ENCODE measurements at regions of chr7 and their contacts with region 1.

Region 1: GRCh38 chr7:116588641-116589594 is 64.1 kb downstream of the CAV1 start:
- DNase-seq: no peak
- ATAC-seq: peak; percentile 80
- H3K4me3 ChIP-seq: no peak overlapping the region
- H3K27ac ChIP-seq: no peak overlapping the region
- H3K4me1 ChIP-seq: peaks cover 29% of the 10 kb centered on the region
- H3K27me3 ChIP-seq: peaks cover 0 to 2% of the 10 kb centered on the region in 2 experiments; a peak in 2 of 4 replicates
- CTCF ChIP-seq: peak; percentile 40 to 70 (median 51); a peak in 5 of 6 replicates
- EP300 ChIP-seq: no peak
- POLR2A ChIP-seq: no peak
- RAD21 ChIP-seq: peak; percentile 88

Region 2: DNA sequence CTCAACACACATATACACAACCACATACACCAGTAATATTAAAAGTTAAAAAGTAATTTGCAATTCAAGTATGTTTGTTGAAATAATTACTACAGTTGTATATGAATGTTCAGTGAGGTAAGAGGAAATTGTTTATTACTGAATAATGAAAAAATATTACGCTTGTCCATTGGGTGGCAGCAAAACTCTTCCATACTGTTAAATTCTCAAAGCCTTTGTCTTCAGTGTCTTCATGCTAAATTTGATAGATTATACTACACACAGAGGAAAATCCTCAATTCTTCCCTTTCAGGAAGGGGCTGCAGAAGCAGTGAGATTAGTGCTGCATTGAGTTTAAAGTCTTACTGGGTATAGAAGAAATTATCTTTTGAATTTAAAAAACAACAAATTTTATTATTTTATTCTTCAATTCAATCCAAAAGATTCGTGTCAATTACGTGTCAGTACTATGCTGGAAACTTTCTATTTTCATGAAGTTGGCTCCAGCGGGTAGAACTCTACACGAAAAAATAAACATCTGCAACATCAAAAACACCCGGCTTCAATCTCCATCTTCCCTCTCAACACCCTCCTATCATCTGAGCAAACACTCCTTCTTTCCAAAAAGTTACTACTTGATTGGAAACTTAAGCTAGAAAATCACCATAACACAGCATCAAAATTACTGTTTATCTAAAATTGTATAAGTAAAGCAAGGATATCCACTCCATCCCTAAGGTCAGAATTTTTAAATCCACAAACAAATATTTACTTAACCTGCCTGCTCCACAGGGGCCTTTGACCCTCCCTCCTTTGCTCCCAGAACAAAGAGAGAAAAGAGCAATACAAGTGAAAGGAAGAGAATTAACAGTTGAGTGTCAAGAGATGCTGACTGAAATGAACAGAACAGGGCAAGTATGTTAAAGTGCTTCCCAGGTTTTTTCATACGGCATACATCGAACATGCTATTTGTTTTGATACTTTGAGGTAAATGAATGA is 415.6 kb before region 1 on chr7:
- CTCF ChIA-PET with region 1: interaction called, 33 read pairs
- POLR2A ChIA-PET with region 1: no interaction called
- RAD21 ChIA-PET with region 1: interaction called, 5 read pairs
- SMC1A ChIA-PET with region 1: interaction called, 11 read pairs
- in situ Hi-C with region 1: loop called (anchors 10 kb)
- intact Hi-C with region 1: loop called (anchors 1 kb)
- DNase-seq: no peak
- ATAC-seq: peak; percentile 74
- H3K4me3 ChIP-seq: no peak overlapping the region
- H3K27ac ChIP-seq: no peak overlapping the region
- H3K4me1 ChIP-seq: no peaks in the 10 kb centered on the region
- H3K27me3 ChIP-seq: no peaks in the 10 kb centered on the region
- CTCF ChIP-seq: peak; percentile 28 to 67 (median 31); a peak in 4 of 6 replicates
- EP300 ChIP-seq: no peak
- POLR2A ChIP-seq: no peak
- RAD21 ChIP-seq: peak; percentile 76

Region 3: GRCh38 chr7:116236020-116236630 is 352.8 kb before region 1 on chr7:
- CTCF ChIA-PET with region 1: interaction called, 15 read pairs
- POLR2A ChIA-PET with region 1: no interaction called
- RAD21 ChIA-PET with region 1: interaction called, 10 read pairs
- SMC1A ChIA-PET with region 1: interaction called, 7 read pairs
- in situ Hi-C with region 1: no loop called
- intact Hi-C with region 1: no loop called
- DNase-seq: no peak
- ATAC-seq: peak; percentile 85
- H3K4me3 ChIP-seq: no peak overlapping the region
- H3K27ac ChIP-seq: no peak overlapping the region
- H3K4me1 ChIP-seq: no peaks in the 10 kb centered on the region
- H3K27me3 ChIP-seq: no peaks in the 10 kb centered on the region
- CTCF ChIP-seq: peak; percentile 28 to 66 (median 46); a peak in 5 of 6 replicates
- EP300 ChIP-seq: no peak
- POLR2A ChIP-seq: no peak
- RAD21 ChIP-seq: peak; percentile 76

Region 4: GRCh38 chr7:116399819-116400218 is 189.1 kb before region 1 on chr7:
- CTCF ChIA-PET with region 1: no interaction called
- POLR2A ChIA-PET with region 1: no interaction called
- RAD21 ChIA-PET with region 1: no interaction called
- SMC1A ChIA-PET with region 1: no interaction called
- in situ Hi-C with region 1: no loop called
- intact Hi-C with region 1: no loop called
- DNase-seq: no peak
- ATAC-seq: no peak
- H3K4me3 ChIP-seq: no peak overlapping the region
- H3K27ac ChIP-seq: no peak overlapping the region
- H3K4me1 ChIP-seq: no peaks in the 10 kb centered on the region
- H3K27me3 ChIP-seq: peaks cover 0 to 5% of the 10 kb centered on the region in 2 experiments; a peak in 1 of 4 replicates
- CTCF ChIP-seq: no peak
- EP300 ChIP-seq: no peak
- POLR2A ChIP-seq: no peak
- RAD21 ChIP-seq: no peak

Region 5: DNA sequence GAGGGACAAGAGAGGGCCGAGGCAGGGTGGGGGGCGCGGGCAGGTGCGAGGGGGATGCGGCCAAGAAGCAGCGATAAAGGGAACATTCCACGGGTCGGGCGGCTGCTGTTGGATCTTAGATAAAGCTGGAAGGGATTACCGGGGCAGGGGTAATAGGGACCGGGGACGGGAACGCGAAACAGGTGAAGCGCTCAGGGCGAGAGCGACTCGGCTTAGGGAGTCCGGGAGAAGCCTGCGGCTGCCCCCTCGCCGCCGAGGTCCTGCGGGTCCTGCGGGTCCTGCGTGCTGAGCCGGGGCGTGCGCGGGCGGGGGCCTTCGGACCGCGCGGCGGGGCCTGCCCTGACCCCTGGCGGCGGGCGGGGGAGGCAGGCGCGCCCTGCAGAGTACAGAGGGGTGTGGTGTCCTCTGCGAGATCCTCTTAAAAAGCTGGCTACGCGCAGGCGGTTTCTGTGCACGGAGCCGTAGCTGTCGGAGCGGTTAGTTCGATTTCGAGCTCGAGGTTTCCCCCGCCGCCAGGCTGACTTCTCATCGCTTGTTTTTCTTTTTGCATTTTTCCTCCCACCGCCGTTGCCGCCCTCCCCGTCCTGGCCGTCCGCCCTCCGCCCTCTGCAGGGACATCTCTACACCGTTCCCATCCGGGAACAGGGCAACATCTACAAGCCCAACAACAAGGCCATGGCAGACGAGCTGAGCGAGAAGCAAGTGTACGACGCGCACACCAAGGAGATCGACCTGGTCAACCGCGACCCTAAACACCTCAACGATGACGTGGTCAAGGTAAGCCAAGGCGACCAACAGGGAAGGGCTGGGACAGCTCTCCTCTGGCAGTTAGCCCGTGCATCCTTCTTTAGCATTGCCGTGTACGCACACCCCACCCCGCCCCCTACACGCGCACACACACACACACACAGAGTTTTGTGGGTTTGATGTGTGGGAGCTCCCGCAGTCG is 62.7 kb before region 1 on chr7:
- CTCF ChIA-PET with region 1: interaction called, 22 read pairs
- POLR2A ChIA-PET with region 1: no interaction called
- RAD21 ChIA-PET with region 1: interaction called, 16 read pairs
- SMC1A ChIA-PET with region 1: interaction called, 12 read pairs
- in situ Hi-C with region 1: no loop called
- intact Hi-C with region 1: loop called (anchors 1 kb)
- DNase-seq: no peak
- ATAC-seq: peak; percentile 96
- H3K4me3 ChIP-seq: peak overlapping the region; percentile 69
- H3K27ac ChIP-seq: no peak overlapping the region
- H3K4me1 ChIP-seq: peaks cover 26% of the 10 kb centered on the region
- H3K27me3 ChIP-seq: 0 out of 4 replicates have a peak, but pooled peaks cover 0 to 3% of the 10 kb centered on the region in 2 experiments
- CTCF ChIP-seq: peak; percentile 70 to 79 (median 71); a peak in 5 of 6 replicates
- EP300 ChIP-seq: no peak
- POLR2A ChIP-seq: no peak
- RAD21 ChIP-seq: peak; percentile 57

Region 6: DNA sequence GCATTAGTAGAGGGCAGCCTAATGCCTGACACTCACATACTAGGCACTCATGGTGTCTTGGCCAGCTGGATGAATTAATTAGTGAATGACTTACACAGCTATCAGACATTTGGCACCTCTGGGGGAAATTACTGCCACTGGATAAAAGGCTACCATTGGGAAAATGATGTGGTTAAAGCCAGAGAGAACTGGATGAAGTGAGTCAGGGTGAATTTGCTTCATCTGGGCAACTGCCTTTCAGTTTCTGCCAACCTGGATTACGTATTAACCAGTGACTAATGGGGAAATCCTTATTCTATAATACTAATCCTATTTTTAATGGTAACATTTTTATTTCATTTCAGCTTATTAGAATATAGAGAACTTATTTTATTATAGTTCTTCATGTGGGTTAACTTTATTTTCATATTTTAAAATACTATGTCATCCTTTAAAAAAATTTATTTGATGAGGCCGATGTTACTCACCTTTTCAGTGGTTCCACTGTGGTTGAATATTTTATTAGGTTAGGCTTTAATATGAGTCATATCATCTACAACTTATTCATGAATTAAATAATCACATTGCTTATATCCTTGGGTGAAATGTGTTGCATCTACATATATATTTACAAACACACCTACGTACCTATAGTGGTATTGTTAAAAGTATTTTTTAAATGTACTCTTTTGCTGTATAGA is 187.8 kb after region 1 on chr7:
- CTCF ChIA-PET with region 1: interaction called, 22 read pairs
- POLR2A ChIA-PET with region 1: no interaction called
- RAD21 ChIA-PET with region 1: interaction called, 3 read pairs
- SMC1A ChIA-PET with region 1: interaction called, 5 read pairs
- in situ Hi-C with region 1: no loop called
- intact Hi-C with region 1: no loop called
- DNase-seq: peak; percentile 13
- ATAC-seq: peak; percentile 84
- H3K4me3 ChIP-seq: no peak overlapping the region
- H3K27ac ChIP-seq: no peak overlapping the region
- H3K4me1 ChIP-seq: no peaks in the 10 kb centered on the region
- H3K27me3 ChIP-seq: peaks cover 2 to 3% of the 10 kb centered on the region in 2 experiments; a peak in 2 of 4 replicates
- CTCF ChIP-seq: no peak
- EP300 ChIP-seq: no peak
- POLR2A ChIP-seq: no peak
- RAD21 ChIP-seq: no peak